ENCODE measurements at regions of chr9 and their contacts with region 1.

Region 1: GRCh38 chr9:2489838-2490314 is 131.7 kb upstream of the VLDLR start:
- DNase-seq: no peak
- ATAC-seq: peak; percentile 60
- H3K4me3 ChIP-seq: no peak overlapping the region
- H3K27ac ChIP-seq: no peak overlapping the region
- H3K4me1 ChIP-seq: no peaks in the 10 kb centered on the region
- H3K27me3 ChIP-seq: no peaks in the 10 kb centered on the region

Region 2: DNA sequence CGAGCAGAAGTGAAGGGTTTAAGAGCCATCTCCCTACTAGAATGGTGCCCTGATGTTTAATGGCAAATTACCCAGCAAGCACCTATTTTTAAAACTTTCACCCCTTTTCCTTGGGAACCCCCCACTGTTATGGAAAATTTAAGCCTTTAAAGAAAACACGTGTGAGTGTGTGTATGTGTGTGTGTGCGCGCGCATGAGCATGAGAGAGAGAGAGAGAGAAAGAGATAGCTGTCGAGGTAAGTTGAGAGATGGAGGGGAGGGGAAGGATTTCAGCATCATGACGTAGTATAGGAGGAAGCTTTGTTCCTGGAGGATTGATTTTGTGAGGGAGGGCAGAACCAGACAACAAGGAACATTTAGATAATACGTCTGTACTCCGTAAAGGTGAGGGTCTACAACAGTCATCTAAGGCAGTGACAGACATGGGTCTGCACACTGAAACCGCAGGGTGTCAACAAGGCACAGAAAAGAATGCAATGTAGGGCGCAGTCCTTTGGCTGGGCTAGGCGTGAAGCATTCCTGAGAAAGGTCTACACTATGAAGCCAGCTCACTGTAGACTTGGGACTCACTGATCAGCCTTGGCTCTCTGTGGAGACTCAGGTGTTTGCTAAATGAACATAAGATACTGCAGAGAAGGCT is 247.0 kb before region 1 on chr9:
- intact Hi-C with region 1: no loop called
- DNase-seq: no peak
- ATAC-seq: no peak
- H3K4me3 ChIP-seq: peak overlapping the region; percentile 50 to 72
- H3K27ac ChIP-seq: no peak overlapping the region
- H3K4me1 ChIP-seq: no peaks in the 10 kb centered on the region
- H3K27me3 ChIP-seq: no peaks in the 10 kb centered on the region

Region 3: GRCh38 chr9:2531481-2531880 is 41.6 kb after region 1 on chr9:
- intact Hi-C with region 1: loop called in 1 of 2 experiments (anchors 10 kb)
- DNase-seq: no peak
- ATAC-seq: no peak
- H3K4me3 ChIP-seq: no peak overlapping the region
- H3K27ac ChIP-seq: no peak overlapping the region
- H3K4me1 ChIP-seq: no peaks in the 10 kb centered on the region
- H3K27me3 ChIP-seq: no peaks in the 10 kb centered on the region

Region 4: DNA sequence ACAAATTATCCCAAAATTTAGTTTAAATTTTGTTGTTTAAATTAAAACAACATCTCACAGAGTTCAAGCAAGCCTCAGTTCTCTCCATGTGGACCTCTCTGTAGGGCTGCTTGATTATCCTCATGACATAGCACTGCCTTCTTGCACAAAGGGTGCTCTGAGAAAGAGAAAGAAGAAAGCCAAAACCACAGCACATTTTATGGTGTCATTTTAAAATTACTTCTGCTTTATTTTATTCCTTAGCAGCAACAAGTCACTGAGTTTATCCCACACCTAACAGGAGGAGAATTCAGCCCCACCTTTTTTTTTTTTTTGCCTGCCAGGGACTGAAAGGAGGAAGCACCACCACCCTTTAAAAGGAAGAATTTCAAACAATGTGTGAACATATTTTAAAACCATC is 214.6 kb after region 1 on chr9:
- intact Hi-C with region 1: no loop called
- DNase-seq: no peak
- ATAC-seq: no peak
- H3K4me3 ChIP-seq: no peak overlapping the region
- H3K27ac ChIP-seq: no peak overlapping the region
- H3K4me1 ChIP-seq: no peaks in the 10 kb centered on the region
- H3K27me3 ChIP-seq: no peaks in the 10 kb centered on the region